CD4-positive, alpha-beta T cell (primary cell): ENCODE measurements at regions of chr16 and their contacts with region 1.

Region 1: GRCh38 chr16:25060920-25061319 is 45.8 kb upstream of the ARHGAP17 start:
- DNase-seq: peak in 9 of 14 experiments; percentile 4 to 88 (median 36)
- ATAC-seq: peak; percentile 99
- H3K4me3 ChIP-seq: no peak overlapping the region
- H3K4me3 Mint-ChIP-seq: peak overlapping the region; percentile 81
- H3K27ac ChIP-seq: peak overlapping the region; percentile 48 to 76
- H3K27ac Mint-ChIP-seq: peak overlapping the region; percentile 96
- H3K4me1 ChIP-seq: peaks cover 52% of the 10 kb centered on the region
- H3K4me1 Mint-ChIP-seq: peaks cover 58% of the 10 kb centered on the region
- H3K27me3 ChIP-seq: no peaks in the 10 kb centered on the region
- H3K27me3 Mint-ChIP-seq: no peaks in the 10 kb centered on the region
- CTCF ChIP-seq: no peak

Region 2: GRCh38 chr16:24689145-24689544 is 371.8 kb before region 1 on chr16:
- CTCF ChIA-PET with region 1: no interaction called
- POLR2A ChIA-PET with region 1: no interaction called
- intact Hi-C with region 1: no loop called
- DNase-seq: peak in 1 of 14 experiments; percentile 13
- ATAC-seq: no peak
- H3K4me3 ChIP-seq: no peak overlapping the region
- H3K4me3 Mint-ChIP-seq: no peak overlapping the region
- H3K27ac ChIP-seq: no peak overlapping the region
- H3K27ac Mint-ChIP-seq: no peak overlapping the region
- H3K4me1 ChIP-seq: no peaks in the 10 kb centered on the region
- H3K4me1 Mint-ChIP-seq: no peaks in the 10 kb centered on the region
- H3K27me3 ChIP-seq: peaks cover 0 to 3% of the 10 kb centered on the region in 2 experiments
- H3K27me3 Mint-ChIP-seq: peaks cover 8% of the 10 kb centered on the region
- CTCF ChIP-seq: no peak

Region 3: DNA sequence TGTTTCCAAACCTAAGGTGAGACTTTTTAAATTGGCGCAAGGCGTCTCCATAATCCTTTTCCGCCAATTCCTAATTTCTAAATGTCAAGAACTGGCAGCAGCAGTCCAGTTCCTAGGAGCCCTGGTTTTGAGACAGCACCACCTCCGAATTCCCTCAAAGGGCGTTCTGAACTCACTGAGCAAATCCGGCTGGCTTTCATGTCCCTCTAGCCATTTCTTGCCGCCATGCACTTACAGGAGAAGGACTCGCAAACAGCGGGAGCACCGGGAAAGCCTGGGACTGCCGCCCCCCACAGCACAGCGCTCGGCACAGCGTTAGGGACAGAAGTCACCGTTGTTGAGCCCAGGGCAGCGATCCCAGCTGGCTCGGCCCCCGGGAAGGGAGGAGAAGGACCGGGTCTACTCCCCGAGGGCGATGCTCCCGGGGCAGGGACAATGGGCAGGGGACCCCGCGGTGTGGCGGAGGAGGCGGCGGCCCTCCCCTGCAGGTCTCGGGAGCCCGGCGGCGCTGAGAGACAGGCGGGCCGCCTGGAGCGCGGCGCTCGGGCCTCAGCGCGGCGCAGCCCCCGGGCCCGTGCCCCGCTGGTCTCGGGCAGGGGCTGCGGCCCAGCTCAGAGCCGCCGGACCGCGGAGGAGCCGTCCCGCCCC is 46.3 kb before region 1 on chr16:
- CTCF ChIA-PET with region 1: no interaction called
- POLR2A ChIA-PET with region 1: interaction called, 19 read pairs
- intact Hi-C with region 1: no loop called
- DNase-seq: peak in 10 of 14 experiments; percentile 1 to 49 (median 13)
- ATAC-seq: peak; percentile 34
- H3K4me3 ChIP-seq: peak overlapping the region; percentile 89
- H3K4me3 Mint-ChIP-seq: peak overlapping the region; percentile 96
- H3K27ac ChIP-seq: peak overlapping the region; percentile 76 to 78
- H3K27ac Mint-ChIP-seq: peak overlapping the region; percentile 91
- H3K4me1 ChIP-seq: peaks cover 58% of the 10 kb centered on the region
- H3K4me1 Mint-ChIP-seq: peaks cover 79% of the 10 kb centered on the region
- H3K27me3 ChIP-seq: no peaks in the 10 kb centered on the region
- H3K27me3 Mint-ChIP-seq: no peaks in the 10 kb centered on the region
- CTCF ChIP-seq: no peak

Region 4: DNA sequence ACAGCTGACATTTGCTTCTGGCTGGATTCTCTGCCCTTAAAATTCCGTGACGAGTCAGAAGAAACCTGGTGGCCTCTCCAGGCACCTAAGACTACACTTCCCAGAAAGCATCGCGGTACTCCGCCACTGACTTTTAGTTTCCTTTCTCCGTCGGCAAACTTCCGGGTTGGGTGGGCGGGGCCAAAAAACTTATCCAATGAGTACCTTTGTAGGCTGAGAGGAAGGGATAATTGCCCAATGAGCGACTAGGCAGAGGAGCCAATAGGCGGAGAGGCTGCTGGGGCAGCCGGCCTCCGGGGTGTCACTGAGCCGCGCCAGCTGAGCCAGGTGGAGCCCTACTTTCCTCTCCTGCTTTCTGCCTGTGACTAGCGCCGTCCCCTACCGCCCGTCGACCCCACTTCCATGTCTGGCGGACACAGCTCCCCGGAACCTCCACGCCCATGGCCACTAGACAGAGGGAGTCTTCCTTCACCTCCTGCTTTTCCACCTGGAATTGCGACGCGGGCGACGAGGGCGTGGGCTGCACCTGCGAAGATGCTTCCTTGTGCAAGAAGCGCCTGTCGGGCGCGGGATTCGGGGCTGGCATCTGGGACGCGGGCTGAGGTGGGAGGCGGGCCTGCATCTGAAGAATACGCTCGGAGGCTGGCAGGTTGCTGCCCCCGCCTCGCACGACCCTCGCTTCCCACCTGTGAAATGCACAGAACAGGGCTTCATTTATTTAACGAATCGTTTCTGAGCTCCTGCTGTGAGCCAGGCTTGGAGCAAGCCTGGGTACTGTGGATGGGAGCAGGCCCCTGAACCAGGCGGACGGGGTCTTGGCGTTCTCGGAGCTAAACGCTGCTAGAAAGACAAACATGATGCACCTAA is 29.2 kb before region 1 on chr16:
- CTCF ChIA-PET with region 1: no interaction called
- POLR2A ChIA-PET with region 1: interaction called, 10 read pairs
- intact Hi-C with region 1: loop called in 1 of 2 experiments (anchors 5 kb)
- DNase-seq: peak; percentile 81 to 97 (median 86)
- ATAC-seq: peak; percentile 99
- H3K4me3 ChIP-seq: peak overlapping the region; percentile 88
- H3K4me3 Mint-ChIP-seq: peak overlapping the region; percentile 90
- H3K27ac ChIP-seq: peak overlapping the region in 1 of 2 donors; percentile 52
- H3K27ac Mint-ChIP-seq: peak overlapping the region; percentile 90
- H3K4me1 ChIP-seq: peaks cover 20% of the 10 kb centered on the region
- H3K4me1 Mint-ChIP-seq: peaks cover 30% of the 10 kb centered on the region
- H3K27me3 ChIP-seq: no peaks in the 10 kb centered on the region
- H3K27me3 Mint-ChIP-seq: no peaks in the 10 kb centered on the region
- CTCF ChIP-seq: no peak

Region 5: DNA sequence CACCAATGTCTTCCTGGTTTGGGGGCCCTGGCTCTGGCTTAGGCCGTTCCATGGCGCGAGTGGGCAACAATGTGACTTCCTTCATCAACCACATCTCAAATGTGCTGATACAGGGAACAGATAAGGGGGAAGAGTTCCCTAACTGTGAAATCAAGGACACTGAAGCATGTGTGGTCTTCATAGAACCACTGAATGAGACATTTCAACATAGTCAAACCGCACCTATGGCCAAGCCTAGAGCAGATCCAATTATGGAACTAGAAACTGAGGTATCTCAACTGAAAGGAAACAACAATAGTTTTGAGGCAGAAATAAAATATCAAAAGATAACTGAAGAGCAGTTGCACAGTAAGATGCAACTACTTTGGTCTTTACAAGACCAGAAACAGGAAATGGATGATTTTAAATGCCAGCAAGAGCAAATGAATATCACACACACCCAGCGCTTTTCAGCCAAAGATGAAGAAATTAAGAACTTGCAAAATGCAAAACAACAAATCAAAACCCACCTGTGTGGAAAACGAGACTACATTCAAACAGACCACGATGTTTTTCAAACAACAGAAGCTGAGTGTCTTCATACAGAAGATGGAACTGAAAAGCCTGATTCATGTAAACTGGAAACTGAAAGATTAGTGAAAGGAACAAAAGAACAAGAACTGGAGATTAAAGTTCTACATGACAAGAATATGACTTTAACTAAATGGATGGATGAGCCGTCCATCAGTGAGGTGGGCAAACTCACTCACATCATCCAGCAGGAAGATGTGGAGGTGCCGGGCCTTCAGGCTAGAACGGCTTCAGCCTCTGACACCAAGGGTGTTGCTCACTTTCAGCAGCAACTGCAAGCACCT is 32.5 kb after region 1 on chr16:
- CTCF ChIA-PET with region 1: no interaction called
- POLR2A ChIA-PET with region 1: interaction called, 10 read pairs
- intact Hi-C with region 1: no loop called
- DNase-seq: peak in 4 of 14 experiments; percentile 15 to 24 (median 18)
- ATAC-seq: peak; percentile 37
- H3K4me3 ChIP-seq: no peak overlapping the region
- H3K4me3 Mint-ChIP-seq: peak overlapping the region; percentile 65
- H3K27ac ChIP-seq: peak overlapping the region; percentile 53 to 57
- H3K27ac Mint-ChIP-seq: peak overlapping the region; percentile 94
- H3K4me1 ChIP-seq: peaks cover 20% of the 10 kb centered on the region
- H3K4me1 Mint-ChIP-seq: peaks cover 33% of the 10 kb centered on the region
- H3K27me3 ChIP-seq: no peaks in the 10 kb centered on the region
- H3K27me3 Mint-ChIP-seq: no peaks in the 10 kb centered on the region
- CTCF ChIP-seq: no peak

Region 6: GRCh38 chr16:25135254-25135878 is 74.4 kb after region 1 on chr16:
- CTCF ChIA-PET with region 1: no interaction called
- POLR2A ChIA-PET with region 1: no interaction called
- intact Hi-C with region 1: no loop called
- DNase-seq: no peak
- ATAC-seq: no peak
- H3K4me3 ChIP-seq: no peak overlapping the region
- H3K4me3 Mint-ChIP-seq: no peak overlapping the region
- H3K27ac ChIP-seq: no peak overlapping the region
- H3K27ac Mint-ChIP-seq: no peak overlapping the region
- H3K4me1 ChIP-seq: no peaks in the 10 kb centered on the region
- H3K4me1 Mint-ChIP-seq: no peaks in the 10 kb centered on the region
- H3K27me3 ChIP-seq: no peaks in the 10 kb centered on the region
- H3K27me3 Mint-ChIP-seq: no peaks in the 10 kb centered on the region
- CTCF ChIP-seq: no peak

Region 7: DNA sequence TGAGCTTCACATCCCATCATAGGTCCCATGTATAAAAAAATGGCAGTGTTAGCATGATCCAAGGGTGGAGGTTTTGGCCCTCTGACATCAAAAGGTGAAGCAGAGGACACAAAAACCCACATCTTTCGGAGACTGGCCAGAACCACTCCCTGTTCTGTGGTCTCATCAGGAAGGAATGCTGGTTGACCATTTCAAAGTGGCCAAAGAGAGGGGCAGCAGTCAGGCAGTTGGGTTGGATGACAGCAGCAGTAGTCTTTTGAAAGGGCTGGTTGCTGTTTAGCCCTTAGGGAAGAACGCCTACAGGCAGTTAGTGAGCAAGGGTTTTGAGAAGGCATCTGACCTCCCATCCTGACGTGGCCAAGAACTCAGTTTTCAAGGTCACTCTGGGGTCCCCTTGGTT is 91.1 kb after region 1 on chr16:
- CTCF ChIA-PET with region 1: no interaction called
- POLR2A ChIA-PET with region 1: no interaction called
- intact Hi-C with region 1: no loop called
- DNase-seq: no peak
- ATAC-seq: no peak
- H3K4me3 ChIP-seq: no peak overlapping the region
- H3K4me3 Mint-ChIP-seq: no peak overlapping the region
- H3K27ac ChIP-seq: no peak overlapping the region
- H3K27ac Mint-ChIP-seq: no peak overlapping the region
- H3K4me1 ChIP-seq: no peaks in the 10 kb centered on the region
- H3K4me1 Mint-ChIP-seq: no peaks in the 10 kb centered on the region
- H3K27me3 ChIP-seq: no peaks in the 10 kb centered on the region
- H3K27me3 Mint-ChIP-seq: no peaks in the 10 kb centered on the region
- CTCF ChIP-seq: no peak